AG04450 (cell line): ENCODE measurements at regions of chr6 and their contacts with region 1.

Region 1: GRCh38 chr6:27126815-27127537 is 120.5 kb upstream of the PRSS16 start:
- DNase-seq: peak; percentile 82
- H3K4me3 ChIP-seq: peak overlapping the region; percentile 53
- H3K27ac ChIP-seq: peak overlapping the region; percentile 47
- H3K27me3 ChIP-seq: no peaks in the 10 kb centered on the region
- CTCF ChIP-seq: peak; percentile 91

Region 2: GRCh38 chr6:26401987-26402658 is 724.9 kb before region 1 on chr6 and contains the start of gene BTN3A1:
- CTCF ChIA-PET with region 1: no interaction called
- POLR2A ChIA-PET with region 1: no interaction called
- DNase-seq: peak; percentile 24
- H3K4me3 ChIP-seq: peak within 1 kb of the TSS; percentile 67
- H3K27ac ChIP-seq: peak within 1 kb of the TSS; percentile 80
- H3K27me3 ChIP-seq: no peaks in the 10 kb centered on the region
- CTCF ChIP-seq: no peak
- polyA plus RNA-seq, gene BTN3A1: 32.3 and 32.7 TPM in 2 replicates

Region 3: DNA sequence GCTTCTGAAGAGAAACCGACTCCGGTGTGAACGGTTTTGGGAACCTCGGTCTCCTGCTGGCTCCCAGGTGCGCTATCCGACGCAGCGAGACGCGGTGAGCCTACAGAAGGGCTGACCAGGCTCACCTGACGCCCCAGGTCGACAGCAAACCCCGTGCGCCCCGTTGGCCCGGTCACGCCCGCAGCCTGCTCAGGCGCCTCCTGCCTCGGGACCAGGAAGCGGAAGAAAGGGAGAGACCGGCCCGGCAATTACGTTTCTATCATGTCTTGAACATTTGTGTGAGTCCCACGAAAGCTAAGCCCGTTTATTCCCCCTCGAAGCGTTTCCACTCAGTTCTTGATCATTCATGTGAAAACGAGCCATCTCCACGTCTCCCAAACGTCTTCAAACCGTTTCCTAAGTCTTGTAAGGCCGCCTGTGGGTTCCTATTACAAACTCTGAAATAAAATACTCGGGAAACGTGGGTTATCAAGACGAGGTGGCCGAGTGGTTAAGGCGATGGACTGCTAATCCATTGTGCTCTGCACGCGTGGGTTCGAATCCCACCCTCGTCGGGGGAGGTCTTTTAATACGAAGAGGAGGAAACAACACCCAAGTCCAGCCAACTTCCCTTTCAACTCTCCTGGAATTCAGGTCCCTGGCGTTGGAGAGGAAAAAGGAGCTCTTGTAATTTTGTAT is 30.0 kb before region 1 on chr6:
- CTCF ChIA-PET with region 1: interaction called, 10 read pairs
- POLR2A ChIA-PET with region 1: no interaction called
- DNase-seq: peak; percentile 26
- H3K4me3 ChIP-seq: peak overlapping the region; percentile 68
- H3K27ac ChIP-seq: peak overlapping the region; percentile 47
- H3K27me3 ChIP-seq: no peaks in the 10 kb centered on the region
- CTCF ChIP-seq: no peak

Region 4: DNA sequence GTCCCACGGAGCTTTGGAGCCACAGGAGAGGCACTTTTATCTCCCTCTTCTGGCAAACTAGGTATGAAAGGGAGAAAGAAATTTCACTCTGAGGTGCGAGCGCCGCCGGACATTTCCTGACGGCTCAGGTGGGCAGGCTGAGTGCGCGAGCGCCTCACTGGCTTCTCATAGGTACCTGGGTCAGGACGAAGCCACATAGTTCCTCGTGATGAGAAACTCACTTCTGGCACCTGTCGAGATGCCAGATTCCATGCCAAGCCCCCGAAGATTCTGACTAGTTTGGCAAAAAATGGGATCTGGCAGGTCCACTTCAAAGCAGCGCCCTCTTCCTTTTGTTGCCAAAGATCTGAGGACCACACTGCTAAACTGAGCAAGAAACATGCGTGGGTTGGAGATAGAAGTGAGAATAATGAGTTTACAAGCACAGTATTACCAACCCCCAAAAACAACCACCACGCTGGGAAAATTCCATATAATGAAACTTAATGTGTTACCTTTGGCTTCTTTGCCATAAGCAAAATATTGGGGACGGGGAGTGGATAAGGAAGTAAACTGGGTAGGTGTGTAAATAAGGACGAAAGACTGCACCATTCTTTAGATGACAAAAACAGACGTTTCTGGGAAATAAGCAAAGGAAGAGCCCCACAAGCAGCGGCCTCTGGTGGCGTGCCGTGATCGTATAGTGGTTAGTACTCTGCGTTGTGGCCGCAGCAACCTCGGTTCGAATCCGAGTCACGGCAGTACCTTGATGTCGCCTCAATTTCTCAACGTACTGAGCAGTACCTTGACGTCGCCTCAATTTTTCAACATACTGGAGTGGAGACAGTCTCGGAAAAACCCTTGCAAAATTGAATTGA is 30.7 kb after region 1 on chr6:
- CTCF ChIA-PET with region 1: interaction called, 18 read pairs
- POLR2A ChIA-PET with region 1: interaction called, 3 read pairs
- DNase-seq: no peak
- H3K4me3 ChIP-seq: peak overlapping the region; percentile 62
- H3K27ac ChIP-seq: no peak overlapping the region
- H3K27me3 ChIP-seq: no peaks in the 10 kb centered on the region
- CTCF ChIP-seq: peak; percentile 62

Region 5: GRCh38 chr6:27177485-27178406 is 50.8 kb after region 1 on chr6:
- CTCF ChIA-PET with region 1: interaction called, 12 read pairs
- POLR2A ChIA-PET with region 1: no interaction called
- DNase-seq: peak; percentile 85
- H3K4me3 ChIP-seq: peak overlapping the region; percentile 95
- H3K27ac ChIP-seq: peak overlapping the region; percentile 96
- H3K27me3 ChIP-seq: peaks cover 4% of the 10 kb centered on the region
- CTCF ChIP-seq: peak; percentile 52

Region 6: DNA sequence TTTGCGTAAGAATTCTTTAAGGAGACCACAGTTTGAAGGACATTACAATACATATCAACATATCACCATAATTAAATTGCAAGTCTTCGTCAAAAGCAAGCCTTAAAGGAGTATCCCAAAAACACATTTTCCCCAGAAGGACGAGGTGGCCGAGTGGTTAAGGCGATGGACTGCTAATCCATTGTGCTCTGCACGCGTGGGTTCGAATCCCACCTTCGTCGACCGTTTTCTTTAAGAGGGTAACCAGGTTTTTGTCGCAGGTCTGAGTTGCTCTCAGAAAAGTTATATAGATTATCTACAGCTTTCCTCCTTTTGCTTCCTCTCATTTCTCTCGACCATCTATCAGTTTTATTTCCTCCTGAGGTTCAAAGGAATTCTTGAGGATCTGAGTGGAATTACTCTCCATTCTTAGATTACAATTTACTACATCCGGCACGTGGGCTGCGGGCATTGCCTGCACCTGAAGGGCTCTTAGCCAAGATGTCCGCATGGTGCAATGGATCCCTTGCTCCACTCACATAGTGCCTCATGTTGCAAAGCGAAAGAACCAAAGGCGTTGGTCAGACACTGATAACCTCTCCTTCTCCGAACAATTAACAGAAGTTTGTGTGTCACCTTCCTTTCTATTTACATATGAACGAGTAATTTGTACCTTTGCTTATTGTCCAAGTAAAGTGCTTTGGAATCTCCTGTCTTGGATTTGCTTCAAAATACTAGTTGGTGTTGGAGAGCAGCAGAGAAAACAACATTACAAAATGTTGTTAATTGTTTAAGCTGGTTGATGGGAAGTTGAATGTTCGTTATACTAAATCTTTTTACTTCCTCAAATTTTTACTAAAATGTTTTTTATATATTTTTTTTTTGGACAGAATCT is 171.1 kb after region 1 on chr6:
- CTCF ChIA-PET with region 1: no interaction called
- POLR2A ChIA-PET with region 1: no interaction called
- DNase-seq: no peak
- H3K4me3 ChIP-seq: peak overlapping the region; percentile 8; the same call in 1 of the 2 replicates
- H3K27ac ChIP-seq: no peak overlapping the region
- H3K27me3 ChIP-seq: no peaks in the 10 kb centered on the region
- CTCF ChIP-seq: no peak

Region 7: DNA sequence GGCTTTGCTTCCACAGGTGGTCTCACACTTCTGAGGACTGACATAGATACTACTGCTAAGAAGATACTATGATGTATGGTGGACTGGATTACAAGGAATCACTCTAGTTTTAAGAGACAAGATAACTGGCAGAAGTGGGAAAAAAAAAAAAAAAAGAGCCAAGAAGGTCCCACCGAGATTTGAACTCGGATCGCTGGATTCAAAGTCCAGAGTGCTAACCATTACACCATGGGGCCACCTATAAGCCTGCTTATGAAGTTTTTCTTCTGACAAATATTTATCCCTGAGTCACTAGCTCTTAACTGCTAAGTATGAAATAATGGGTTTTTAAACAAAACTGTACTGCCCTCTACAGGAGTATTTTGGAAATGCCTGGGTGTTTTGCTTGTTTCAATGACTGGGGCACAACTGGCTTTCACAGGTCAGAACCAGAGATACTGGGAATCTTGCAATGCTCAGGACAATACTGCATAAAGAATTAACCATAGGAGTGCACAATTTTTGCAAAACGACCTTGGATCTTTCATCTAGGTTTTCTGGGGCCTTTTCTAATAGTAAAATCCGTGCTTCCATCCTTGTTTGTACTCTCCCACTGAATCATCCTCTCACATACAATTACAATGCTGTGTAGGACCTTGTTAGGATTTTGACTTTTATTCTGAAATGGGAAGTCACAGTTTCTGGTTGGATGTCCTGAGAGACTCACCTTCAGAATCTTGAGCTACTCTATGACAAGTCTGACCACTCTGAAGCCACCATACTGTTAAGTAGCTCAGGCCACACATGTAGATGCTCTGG is 668.9 kb after region 1 on chr6:
- CTCF ChIA-PET with region 1: interaction called, 39 read pairs
- POLR2A ChIA-PET with region 1: interaction called, 3 read pairs
- DNase-seq: peak; percentile 84
- H3K4me3 ChIP-seq: no peak overlapping the region
- H3K27ac ChIP-seq: no peak overlapping the region
- H3K27me3 ChIP-seq: no peaks in the 10 kb centered on the region
- CTCF ChIP-seq: peak; percentile 83